ENCODE measurements at regions of chr3 and their contacts with region 1.

Region 1: DNA sequence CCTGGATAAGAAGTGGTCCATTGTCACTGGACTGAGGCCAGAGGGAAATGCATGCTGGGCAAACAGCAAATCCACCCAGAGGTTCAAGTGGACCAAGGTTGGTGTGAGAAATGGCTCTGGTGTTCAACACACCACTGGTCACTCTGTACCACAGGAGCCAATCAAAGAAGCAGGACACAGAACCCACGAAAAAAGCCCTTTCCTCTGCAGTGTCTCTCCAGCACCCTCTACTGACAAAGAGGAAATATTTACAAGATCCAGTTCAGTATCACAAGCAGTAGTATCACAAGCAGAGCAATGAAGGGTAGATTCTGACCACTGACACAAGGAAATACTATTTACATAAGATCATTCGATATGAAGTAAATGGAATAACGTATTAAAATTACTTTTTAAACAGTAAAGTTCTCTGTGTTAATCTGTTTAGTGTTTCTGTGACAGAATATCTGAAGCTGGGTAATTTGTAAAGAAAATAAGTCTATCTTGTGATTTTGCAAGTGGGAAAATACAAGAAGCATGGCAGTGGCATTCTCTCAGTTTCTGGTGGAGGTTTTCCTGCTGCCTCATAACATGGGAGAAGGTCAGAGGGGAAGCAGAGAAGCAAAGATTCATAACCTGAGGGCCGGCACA is 390.7 kb downstream of the EFHB start:
- DNase-seq: peak; percentile 59
- ATAC-seq: peak; percentile 53
- H3K4me3 ChIP-seq: peak overlapping the region in 2 of 5 experiments; percentile 17 to 36
- H3K4me3 Mint-ChIP-seq: peak overlapping the region; percentile 16
- H3K27ac ChIP-seq: peak overlapping the region; percentile 93
- H3K27ac Mint-ChIP-seq: peak overlapping the region; percentile 60
- H3K4me1 ChIP-seq: peaks cover 55 to 56% of the 10 kb centered on the region in 2 donors
- H3K4me1 Mint-ChIP-seq: peaks cover 64% of the 10 kb centered on the region
- H3K27me3 ChIP-seq: no peaks in the 10 kb centered on the region
- H3K27me3 Mint-ChIP-seq: no peaks in the 10 kb centered on the region
- CTCF ChIP-seq: peak; percentile 81

Region 2: DNA sequence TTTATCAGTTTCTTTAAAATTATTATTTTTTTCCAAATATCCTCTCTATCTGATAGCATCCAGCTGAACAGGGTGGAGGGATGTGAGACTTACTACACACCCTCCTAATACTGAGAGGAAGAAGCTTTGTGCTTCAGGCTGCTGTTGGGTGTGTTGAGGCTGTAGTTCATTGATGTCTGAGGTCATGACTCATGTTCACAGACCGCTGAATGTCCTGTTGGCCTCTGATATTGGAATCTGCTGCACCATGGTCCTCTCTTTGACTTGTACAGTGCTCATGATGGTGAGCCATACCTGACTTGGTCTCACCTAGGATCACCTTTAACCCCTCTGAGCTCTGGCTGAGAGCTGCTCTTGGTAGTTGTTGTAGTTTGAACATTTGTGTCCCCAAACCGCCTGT is 1421.1 kb before region 1 on chr3:
- CTCF ChIA-PET with region 1: no interaction called
- POLR2A ChIA-PET with region 1: no interaction called
- intact Hi-C with region 1: no loop called
- DNase-seq: no peak
- ATAC-seq: no peak
- H3K4me3 ChIP-seq: no peak overlapping the region
- H3K4me3 Mint-ChIP-seq: no peak overlapping the region
- H3K27ac ChIP-seq: no peak overlapping the region
- H3K27ac Mint-ChIP-seq: no peak overlapping the region
- H3K4me1 ChIP-seq: peaks cover 16% of the 10 kb centered on the region in 2 donors
- H3K4me1 Mint-ChIP-seq: peaks cover 16% of the 10 kb centered on the region
- H3K27me3 ChIP-seq: no peaks in the 10 kb centered on the region
- H3K27me3 Mint-ChIP-seq: peaks cover 16% of the 10 kb centered on the region
- CTCF ChIP-seq: no peak

Region 3: DNA sequence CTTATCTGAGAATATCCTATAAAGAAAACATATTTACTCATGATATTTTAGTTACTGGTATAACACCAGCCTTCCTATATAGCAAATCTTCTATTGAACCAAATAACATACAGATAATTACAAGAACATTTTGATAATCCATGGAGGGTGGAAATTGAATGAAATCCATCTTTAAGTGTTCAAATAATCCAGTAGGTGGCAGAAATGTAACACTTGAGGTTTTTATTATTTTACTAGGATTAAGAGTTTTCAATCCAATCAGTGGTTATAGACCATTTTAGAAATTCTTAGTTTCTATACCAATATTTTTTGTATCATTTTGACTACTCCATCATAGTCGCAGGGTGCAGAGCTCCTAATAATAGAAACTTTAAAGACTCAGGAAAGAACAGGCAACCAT is 496.9 kb before region 1 on chr3:
- CTCF ChIA-PET with region 1: no interaction called
- POLR2A ChIA-PET with region 1: no interaction called
- intact Hi-C with region 1: loop called (anchors 5 kb)
- DNase-seq: peak; percentile 8
- ATAC-seq: no peak
- H3K4me3 ChIP-seq: no peak overlapping the region
- H3K4me3 Mint-ChIP-seq: no peak overlapping the region
- H3K27ac ChIP-seq: no peak overlapping the region
- H3K27ac Mint-ChIP-seq: no peak overlapping the region
- H3K4me1 ChIP-seq: no peaks in the 10 kb centered on the region
- H3K4me1 Mint-ChIP-seq: no peaks in the 10 kb centered on the region
- H3K27me3 ChIP-seq: no peaks in the 10 kb centered on the region
- H3K27me3 Mint-ChIP-seq: no peaks in the 10 kb centered on the region
- CTCF ChIP-seq: peak; percentile 49

Region 4: GRCh38 chr3:19065027-19065426 is 478.3 kb before region 1 on chr3:
- CTCF ChIA-PET with region 1: interaction called, 4 read pairs
- POLR2A ChIA-PET with region 1: no interaction called
- intact Hi-C with region 1: loop called (anchors 5 kb)
- DNase-seq: peak; percentile 33
- ATAC-seq: no peak
- H3K4me3 ChIP-seq: no peak overlapping the region
- H3K4me3 Mint-ChIP-seq: no peak overlapping the region
- H3K27ac ChIP-seq: no peak overlapping the region
- H3K27ac Mint-ChIP-seq: no peak overlapping the region
- H3K4me1 ChIP-seq: no peaks in the 10 kb centered on the region
- H3K4me1 Mint-ChIP-seq: no peaks in the 10 kb centered on the region
- H3K27me3 ChIP-seq: no peaks in the 10 kb centered on the region
- H3K27me3 Mint-ChIP-seq: peaks cover 5% of the 10 kb centered on the region
- CTCF ChIP-seq: peak; percentile 70

Region 5: DNA sequence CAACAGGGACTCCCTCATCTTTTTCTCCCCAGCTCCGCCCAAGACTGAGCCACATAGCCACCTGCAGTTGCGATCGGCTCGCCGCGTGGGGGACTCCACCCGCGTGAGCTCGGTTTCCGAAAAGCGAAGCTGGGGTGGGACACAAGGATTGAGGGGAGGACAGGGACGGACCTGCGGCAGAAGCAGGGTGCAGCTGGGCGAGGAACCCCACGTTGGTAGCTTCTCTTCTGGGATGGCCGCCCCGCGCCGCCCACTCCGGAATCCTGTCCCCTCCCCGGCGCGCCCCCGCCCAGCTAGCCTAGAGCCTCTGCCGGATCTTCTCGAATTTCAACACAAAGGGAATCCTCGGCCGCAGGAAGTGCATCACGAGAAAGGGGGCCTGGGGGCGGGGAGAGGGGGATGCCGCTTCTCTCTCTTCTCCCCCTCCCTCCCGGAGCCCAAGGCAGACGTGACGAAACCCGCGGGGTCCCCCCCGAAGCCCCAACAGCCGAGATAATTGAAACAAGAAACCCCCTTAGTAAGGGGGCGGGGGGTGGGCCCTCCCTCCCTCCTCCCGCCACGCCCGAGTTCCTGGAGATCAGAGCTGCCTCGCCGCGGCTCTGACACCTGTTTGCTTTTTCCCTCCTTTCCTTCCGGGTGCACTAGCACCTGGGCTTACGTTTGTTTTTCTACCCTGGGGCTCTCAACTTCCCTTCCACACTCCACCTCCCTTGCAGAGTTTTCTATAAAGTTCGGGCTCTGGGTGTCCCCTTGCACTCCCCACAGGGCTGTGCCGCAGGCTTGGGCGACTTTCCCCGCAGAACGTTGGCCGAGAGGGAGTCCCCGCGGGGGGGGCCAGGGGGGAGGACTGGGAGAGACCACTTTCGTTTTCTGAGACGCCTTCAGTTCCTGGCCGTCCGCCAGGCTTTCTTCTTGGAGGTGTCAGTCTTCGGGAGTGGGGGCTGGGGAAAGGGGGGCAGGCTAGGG is 396.4 kb before region 1 on chr3:
- CTCF ChIA-PET with region 1: interaction called, 6 read pairs
- POLR2A ChIA-PET with region 1: no interaction called
- intact Hi-C with region 1: loop called (anchors 1 kb)
- DNase-seq: peak; percentile 89
- ATAC-seq: peak; percentile 63
- H3K4me3 ChIP-seq: peak overlapping the region; percentile 49 to 84 (median 68)
- H3K4me3 Mint-ChIP-seq: peak overlapping the region; percentile 95
- H3K27ac ChIP-seq: peak overlapping the region; percentile 50 to 80
- H3K27ac Mint-ChIP-seq: peak overlapping the region; percentile 91
- H3K4me1 ChIP-seq: peaks cover 18 to 22% of the 10 kb centered on the region in 2 donors
- H3K4me1 Mint-ChIP-seq: peaks cover 24% of the 10 kb centered on the region
- H3K27me3 ChIP-seq: peaks cover 0 to 5% (median 2%) of the 10 kb centered on the region in 4 experiments
- H3K27me3 Mint-ChIP-seq: peaks cover 13% of the 10 kb centered on the region
- CTCF ChIP-seq: peak; percentile 72

Region 6: GRCh38 chr3:19213601-19214220 is 329.6 kb before region 1 on chr3:
- CTCF ChIA-PET with region 1: interaction called, 7 read pairs
- POLR2A ChIA-PET with region 1: no interaction called
- intact Hi-C with region 1: loop called (anchors 1 kb)
- DNase-seq: peak; percentile 67
- ATAC-seq: peak; percentile 69
- H3K4me3 ChIP-seq: no peak overlapping the region
- H3K4me3 Mint-ChIP-seq: no peak overlapping the region
- H3K27ac ChIP-seq: no peak overlapping the region
- H3K27ac Mint-ChIP-seq: no peak overlapping the region
- H3K4me1 ChIP-seq: peaks cover 0 to 7% of the 10 kb centered on the region in 2 donors
- H3K4me1 Mint-ChIP-seq: peaks cover 4% of the 10 kb centered on the region
- H3K27me3 ChIP-seq: no peaks in the 10 kb centered on the region
- H3K27me3 Mint-ChIP-seq: no peaks in the 10 kb centered on the region
- CTCF ChIP-seq: peak; percentile 58

Region 7: DNA sequence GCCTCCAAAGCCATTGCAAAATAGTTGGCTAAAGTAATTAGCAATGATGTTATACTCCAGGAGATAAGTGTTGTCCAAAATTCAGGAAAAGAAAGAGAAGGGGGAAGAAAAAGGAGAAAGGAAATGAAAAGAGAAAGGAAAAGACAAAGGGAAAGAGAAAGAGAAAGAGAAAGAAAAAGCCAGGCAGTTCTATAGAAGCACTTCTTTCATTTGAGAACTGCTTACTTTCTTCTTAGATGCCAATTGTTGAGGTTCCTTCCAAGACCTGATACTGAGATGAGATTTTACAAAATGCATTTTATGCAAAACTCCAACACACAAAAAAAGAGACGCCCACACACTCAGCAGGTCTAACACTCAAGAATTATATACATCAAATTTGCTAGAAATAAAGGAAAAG is 96.6 kb before region 1 on chr3:
- CTCF ChIA-PET with region 1: no interaction called
- POLR2A ChIA-PET with region 1: no interaction called
- intact Hi-C with region 1: loop called (anchors 5 kb)
- DNase-seq: peak; percentile 13
- ATAC-seq: no peak
- H3K4me3 ChIP-seq: no peak overlapping the region
- H3K4me3 Mint-ChIP-seq: peak overlapping the region; percentile 27
- H3K27ac ChIP-seq: peak overlapping the region in 1 of 2 donors; percentile 13
- H3K27ac Mint-ChIP-seq: peak overlapping the region; percentile 51
- H3K4me1 ChIP-seq: peaks cover 6 to 7% of the 10 kb centered on the region in 2 donors
- H3K4me1 Mint-ChIP-seq: peaks cover 12% of the 10 kb centered on the region
- H3K27me3 ChIP-seq: no peaks in the 10 kb centered on the region
- H3K27me3 Mint-ChIP-seq: no peaks in the 10 kb centered on the region
- CTCF ChIP-seq: no peak

Region 8: DNA sequence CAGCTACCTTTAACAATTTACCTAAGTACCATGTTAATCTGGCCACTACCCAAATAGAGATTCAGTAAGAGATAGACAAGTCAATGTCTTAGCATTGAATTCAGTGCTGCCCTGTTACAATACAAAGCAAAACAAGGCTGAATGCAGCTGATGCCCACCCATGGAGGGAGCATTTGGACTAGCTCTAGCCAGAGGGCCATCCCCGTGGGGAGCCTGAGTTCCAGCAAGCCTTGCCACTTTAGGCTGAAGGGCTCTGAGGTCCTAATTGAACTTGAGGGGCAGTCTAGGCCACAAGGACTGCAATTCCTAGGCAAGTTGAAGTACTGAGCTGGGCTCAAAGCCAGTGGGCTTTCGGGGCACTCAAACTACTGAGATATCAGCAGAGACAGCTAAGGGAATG is 124.8 kb after region 1 on chr3:
- CTCF ChIA-PET with region 1: no interaction called
- POLR2A ChIA-PET with region 1: no interaction called
- intact Hi-C with region 1: no loop called
- DNase-seq: no peak
- ATAC-seq: no peak
- H3K4me3 ChIP-seq: no peak overlapping the region
- H3K4me3 Mint-ChIP-seq: no peak overlapping the region
- H3K27ac ChIP-seq: no peak overlapping the region
- H3K27ac Mint-ChIP-seq: no peak overlapping the region
- H3K4me1 ChIP-seq: no peaks in the 10 kb centered on the region
- H3K4me1 Mint-ChIP-seq: peaks cover 1% of the 10 kb centered on the region
- H3K27me3 ChIP-seq: no peaks in the 10 kb centered on the region
- H3K27me3 Mint-ChIP-seq: no peaks in the 10 kb centered on the region
- CTCF ChIP-seq: no peak

Region 9: GRCh38 chr3:19946832-19947548 is 403.7 kb after region 1 on chr3 and contains the start of gene RAB5A:
- CTCF ChIA-PET with region 1: no interaction called
- POLR2A ChIA-PET with region 1: no interaction called
- intact Hi-C with region 1: loop called (anchors 2 kb)
- DNase-seq: peak; percentile 99
- ATAC-seq: peak; percentile 85
- H3K4me3 ChIP-seq: peak within 1 kb of the TSS; percentile 71 to 95 (median 87)
- H3K4me3 Mint-ChIP-seq: peak within 1 kb of the TSS; percentile 93
- H3K27ac ChIP-seq: peak within 1 kb of the TSS; percentile 96 to 98
- H3K27ac Mint-ChIP-seq: peak within 1 kb of the TSS; percentile 97
- H3K4me1 ChIP-seq: peaks cover 18 to 22% of the 10 kb centered on the region in 2 donors
- H3K4me1 Mint-ChIP-seq: peaks cover 47% of the 10 kb centered on the region
- H3K27me3 ChIP-seq: no peaks in the 10 kb centered on the region
- H3K27me3 Mint-ChIP-seq: no peaks in the 10 kb centered on the region
- CTCF ChIP-seq: no peak
- total RNA-seq, gene RAB5A: 59.4 and 61.9 TPM in 2 replicates

Measured in B cell (primary cell).